Dorsolateral prefrontal cortex (tissue), 120 donors: ENCODE measurements at regions of chr6 and their contacts with region 1.

Region 1: DNA sequence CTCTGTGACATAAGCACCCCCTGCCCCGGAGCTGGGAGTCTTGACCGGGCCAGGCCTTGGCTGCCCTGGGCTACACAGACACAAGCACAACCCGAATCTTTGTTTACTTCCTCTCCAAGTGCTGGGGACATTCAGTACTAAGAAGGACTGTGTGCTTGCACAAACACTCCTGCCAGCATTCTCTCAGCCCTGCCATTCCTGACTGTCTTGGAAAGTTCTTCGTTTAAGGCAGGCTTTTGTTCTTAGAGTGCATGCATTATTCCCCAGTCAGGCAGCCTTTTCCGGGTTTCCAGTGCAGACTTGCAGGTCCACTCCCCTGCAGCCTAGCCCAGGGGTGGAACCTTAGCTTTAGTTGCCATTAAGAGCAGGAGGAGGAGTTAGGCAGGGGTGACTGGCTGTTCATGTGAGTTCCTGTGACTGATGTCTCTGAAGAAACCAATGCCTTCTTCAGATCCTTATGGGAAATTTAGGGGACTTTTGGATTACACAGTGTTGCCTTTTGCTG is 28.6 kb downstream of the FOXO3 start:
- DNase-seq: peak in 7 of 10 donors; percentile 29 to 64 (median 53)
- H3K4me3 ChIP-seq: peak overlapping the region in 25 of 59 donors; percentile 0 to 54 (median 14)
- H3K27ac ChIP-seq: peak overlapping the region; percentile 51 to 97 (median 91)
- H3K27me3 ChIP-seq: no peaks in the 10 kb centered on the region
- CTCF ChIP-seq: peak in 1 of 56 donors; percentile 16

Region 2: DNA sequence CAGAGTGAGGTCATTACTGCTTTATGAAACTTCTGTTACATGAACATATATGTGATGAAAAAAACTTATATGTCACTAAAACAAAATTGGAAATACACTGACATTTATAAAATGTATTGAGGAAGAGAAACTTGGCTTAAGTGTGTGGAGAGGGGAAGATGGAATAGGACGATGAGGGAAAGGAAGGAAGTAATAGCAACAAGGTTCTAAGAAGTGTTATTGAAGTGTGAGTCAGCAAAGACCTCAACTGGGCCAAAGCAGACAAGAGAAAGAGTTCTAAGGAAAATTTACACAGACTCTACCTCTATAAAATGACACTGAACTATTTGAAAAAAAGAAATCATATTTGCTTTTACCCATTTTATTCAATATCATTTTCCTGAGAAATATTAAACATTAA is 366.8 kb before region 1 on chr6:
- intact Hi-C with region 1: no loop called
- DNase-seq: no peak
- H3K4me3 ChIP-seq: no peak overlapping the region
- H3K27ac ChIP-seq: no peak overlapping the region
- H3K27me3 ChIP-seq: no peaks in the 10 kb centered on the region
- CTCF ChIP-seq: no peak

Region 3: GRCh38 chr6:108622641-108623298 is 33.4 kb after region 1 on chr6:
- intact Hi-C with region 1: loop called in 1 of 2 experiments (anchors 5 kb)
- DNase-seq: peak in 5 of 10 donors; percentile 19 to 49 (median 39)
- H3K4me3 ChIP-seq: no peak overlapping the region
- H3K27ac ChIP-seq: peak overlapping the region in 25 of 59 donors; percentile 1 to 69 (median 23)
- H3K27me3 ChIP-seq: no peaks in the 10 kb centered on the region
- CTCF ChIP-seq: peak in 33 of 56 donors; percentile 4 to 57 (median 31)

Region 4: DNA sequence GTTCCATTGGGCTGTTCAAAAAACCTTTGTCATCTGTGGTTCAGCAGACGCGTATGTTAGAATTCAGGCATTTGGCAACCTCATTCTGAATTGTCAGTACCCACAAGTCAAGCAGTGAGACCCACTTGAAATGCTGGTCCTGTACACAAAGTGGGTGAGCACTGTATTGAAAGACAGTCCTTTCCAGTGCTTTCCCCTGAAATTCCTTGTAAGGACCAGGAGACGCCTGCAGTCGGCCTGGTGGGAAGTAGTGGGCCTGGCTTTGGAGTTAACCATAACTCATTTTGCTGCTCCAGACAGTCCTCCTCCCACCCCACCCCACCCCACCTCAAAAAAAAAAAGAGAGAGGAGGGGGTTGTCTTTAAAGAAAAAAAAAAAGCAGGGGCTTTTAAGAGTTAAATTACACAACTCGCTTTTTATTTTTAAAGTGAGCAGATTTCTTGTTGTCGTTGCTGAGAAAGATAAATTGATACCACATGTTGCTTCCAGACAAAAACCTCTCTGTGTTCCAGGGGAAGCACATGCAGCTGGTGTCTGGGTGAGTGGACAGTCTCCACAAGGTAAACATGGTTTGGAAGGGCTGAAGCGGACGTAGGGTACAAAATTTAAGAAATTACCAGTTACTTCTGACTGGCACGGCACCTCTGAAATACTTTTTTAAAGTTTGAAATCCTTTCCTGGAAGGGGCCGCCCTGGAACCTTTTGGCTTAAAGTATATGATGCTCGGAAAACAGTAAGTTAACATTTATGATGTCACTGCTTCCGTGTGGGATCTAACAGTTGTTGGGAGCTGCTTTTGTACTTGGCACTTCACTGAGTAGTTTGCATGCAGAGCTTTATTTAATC is 66.7 kb after region 1 on chr6:
- intact Hi-C with region 1: loop called in 1 of 2 experiments (anchors 10 kb)
- DNase-seq: no peak
- H3K4me3 ChIP-seq: peak overlapping the region in 21 of 59 donors; percentile 5 to 42 (median 21)
- H3K27ac ChIP-seq: peak overlapping the region in 41 of 59 donors; percentile 5 to 75 (median 43)
- H3K27me3 ChIP-seq: no peaks in the 10 kb centered on the region
- CTCF ChIP-seq: no peak